Activated naive CD4-positive, alpha-beta T cell treated with anti-CD3 and anti-CD28 coated beads for 36 hours (primary cell): ENCODE measurements at regions of chr2 and their contacts with region 1.

Region 1: GRCh38 chr2:60873381-60873780 is 8.0 kb upstream of the REL start:
- DNase-seq: peak; percentile 51
- H3K4me3 Mint-ChIP-seq: no peak overlapping the region
- H3K27ac Mint-ChIP-seq: peak overlapping the region; percentile 69
- H3K4me1 Mint-ChIP-seq: peaks cover 32% of the 10 kb centered on the region
- H3K27me3 Mint-ChIP-seq: no peaks in the 10 kb centered on the region

Region 2: DNA sequence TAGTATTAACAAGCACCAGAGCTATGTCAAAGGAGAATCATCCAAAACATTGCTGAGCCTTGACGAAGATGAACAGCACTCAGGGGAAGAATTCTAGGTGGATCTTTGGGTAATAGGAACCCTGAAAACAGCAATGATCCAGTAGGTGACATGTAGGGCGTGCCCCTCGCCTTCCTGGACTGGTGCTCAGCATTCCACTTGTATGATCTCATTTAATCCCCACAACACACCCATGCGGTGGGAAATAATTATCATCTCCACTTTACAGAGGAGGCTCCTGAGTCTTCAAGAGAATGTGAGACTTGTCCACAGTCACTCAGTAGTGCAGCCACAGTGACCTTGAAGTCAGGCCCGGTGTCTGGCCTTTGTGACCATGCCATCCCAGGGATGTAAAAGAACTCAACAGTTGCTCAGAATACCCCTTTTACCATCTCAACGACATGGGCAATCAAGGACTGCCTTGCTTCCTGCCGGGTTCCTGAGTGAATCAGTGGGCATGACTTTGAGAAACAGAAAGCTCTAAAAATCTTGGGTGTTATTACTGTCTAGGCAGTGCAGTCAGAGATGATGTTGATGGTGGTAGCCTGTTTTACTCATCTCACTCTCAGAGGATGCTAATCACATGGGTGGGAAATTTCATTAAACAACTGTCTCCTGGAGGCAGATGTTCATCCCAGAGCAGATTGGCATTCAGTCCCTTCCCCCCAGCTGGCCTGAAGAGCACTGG is 481.6 kb before region 1 on chr2:
- CTCF ChIA-PET with region 1: no interaction called
- intact Hi-C with region 1: no loop called
- DNase-seq: no peak
- H3K4me3 Mint-ChIP-seq: no peak overlapping the region
- H3K27ac Mint-ChIP-seq: no peak overlapping the region
- H3K4me1 Mint-ChIP-seq: no peaks in the 10 kb centered on the region
- H3K27me3 Mint-ChIP-seq: peaks cover 3% of the 10 kb centered on the region

Region 3: DNA sequence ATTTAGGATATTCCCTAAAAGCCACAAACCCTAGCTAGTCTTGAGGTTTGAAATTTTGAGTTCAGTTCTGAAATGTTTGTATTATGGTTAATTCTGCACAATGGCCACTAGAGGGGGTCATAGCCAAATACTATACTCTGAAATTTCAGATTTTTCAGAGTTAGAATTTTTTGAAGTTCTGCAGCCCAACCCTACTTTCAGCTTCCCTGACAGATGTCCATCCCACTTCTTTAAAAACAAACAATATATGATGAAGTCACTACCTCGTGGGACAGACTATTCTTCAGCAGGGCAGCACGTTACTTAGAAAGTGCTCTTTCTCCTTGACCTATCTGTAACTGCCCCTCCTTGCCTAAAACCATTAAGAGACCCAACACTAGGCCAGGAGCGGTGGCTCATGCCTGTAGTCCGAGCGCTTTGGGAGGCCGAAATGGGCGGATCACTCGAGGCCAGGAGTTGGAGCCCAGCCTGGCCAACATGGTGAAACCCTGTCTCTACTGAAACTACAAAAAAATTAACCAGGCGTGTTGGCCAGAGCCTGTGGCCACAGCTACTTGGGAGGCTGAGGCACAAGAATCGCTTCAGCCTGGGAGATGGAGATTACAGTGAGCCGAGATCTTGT is 165.5 kb before region 1 on chr2:
- CTCF ChIA-PET with region 1: no interaction called
- intact Hi-C with region 1: no loop called
- DNase-seq: no peak
- H3K4me3 Mint-ChIP-seq: no peak overlapping the region
- H3K27ac Mint-ChIP-seq: no peak overlapping the region
- H3K4me1 Mint-ChIP-seq: no peaks in the 10 kb centered on the region
- H3K27me3 Mint-ChIP-seq: no peaks in the 10 kb centered on the region

Region 4: GRCh38 chr2:60818272-60818671 is 55.1 kb before region 1 on chr2:
- CTCF ChIA-PET with region 1: no interaction called
- intact Hi-C with region 1: loop called (anchors 1 kb)
- DNase-seq: peak; percentile 80
- H3K4me3 Mint-ChIP-seq: no peak overlapping the region
- H3K27ac Mint-ChIP-seq: peak overlapping the region; percentile 89
- H3K4me1 Mint-ChIP-seq: peaks cover 52% of the 10 kb centered on the region
- H3K27me3 Mint-ChIP-seq: no peaks in the 10 kb centered on the region

Region 5: DNA sequence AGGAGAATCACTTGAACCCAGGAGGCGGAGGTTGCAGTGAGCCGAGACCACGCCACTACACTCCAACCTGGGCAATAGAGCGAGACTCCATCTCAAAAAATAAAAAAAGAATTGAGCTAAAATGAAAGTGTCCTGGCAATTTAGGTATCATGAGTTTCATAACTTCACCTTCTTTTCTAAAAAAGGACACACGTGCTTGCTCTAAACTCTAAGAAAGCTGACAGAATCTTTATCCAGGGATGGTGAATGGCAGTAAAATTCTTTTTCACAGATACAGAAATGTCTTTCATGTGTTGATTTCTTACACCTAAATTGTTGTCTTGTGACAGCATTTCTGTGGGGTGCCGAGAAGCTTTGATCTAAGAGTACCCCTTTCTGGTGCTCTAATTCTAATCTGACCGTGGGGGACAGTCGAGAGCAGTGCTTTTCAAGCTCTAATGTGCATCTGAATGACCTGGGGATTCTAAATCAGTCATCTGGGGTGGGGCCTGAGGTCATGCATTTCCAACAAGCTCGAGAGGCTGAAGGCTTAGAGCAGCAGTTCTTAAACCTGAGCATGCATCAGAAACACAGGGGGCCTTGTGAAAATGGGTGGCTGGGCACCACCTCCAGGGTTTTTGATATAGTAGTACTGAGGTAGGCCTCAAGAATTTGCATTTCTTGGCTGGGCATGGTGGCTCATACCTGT is 34.1 kb before region 1 on chr2:
- CTCF ChIA-PET with region 1: no interaction called
- intact Hi-C with region 1: loop called (anchors 1 kb)
- DNase-seq: no peak
- H3K4me3 Mint-ChIP-seq: no peak overlapping the region
- H3K27ac Mint-ChIP-seq: no peak overlapping the region
- H3K4me1 Mint-ChIP-seq: peaks cover 32% of the 10 kb centered on the region
- H3K27me3 Mint-ChIP-seq: no peaks in the 10 kb centered on the region

Region 6: DNA sequence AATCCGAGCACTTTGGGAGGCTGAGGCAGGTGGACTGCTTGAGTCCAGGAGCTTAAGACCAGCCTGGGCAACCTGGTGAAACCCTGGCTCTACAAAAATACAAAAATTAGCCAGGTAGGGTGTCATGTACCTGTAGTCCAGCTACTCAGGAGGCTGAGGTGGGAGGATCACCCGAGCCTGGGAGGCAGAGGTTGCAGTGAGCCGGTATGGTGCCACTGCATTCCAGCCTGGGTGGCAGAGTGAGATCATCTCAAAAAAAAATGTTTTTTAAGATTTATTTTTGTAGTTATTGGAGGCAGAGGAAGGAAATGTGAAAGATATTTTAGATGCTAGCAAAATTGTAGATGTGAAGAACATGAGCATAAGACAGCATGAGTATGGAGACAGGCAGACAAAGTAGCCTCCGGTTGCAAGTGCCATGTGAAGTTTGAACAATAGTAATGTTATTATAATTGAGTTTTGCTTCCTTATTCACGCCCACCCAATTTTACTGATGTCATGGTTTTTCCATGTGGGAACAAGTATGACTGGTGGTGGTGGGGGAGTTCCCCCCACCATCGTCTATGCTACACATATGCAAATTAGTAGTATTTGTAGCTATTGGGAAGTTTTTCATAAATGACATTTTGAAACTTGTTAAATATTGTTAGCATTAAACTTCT is 26.0 kb after region 1 on chr2:
- CTCF ChIA-PET with region 1: no interaction called
- intact Hi-C with region 1: loop called (anchors 1 kb)
- DNase-seq: peak; percentile 77
- H3K4me3 Mint-ChIP-seq: peak overlapping the region; percentile 24
- H3K27ac Mint-ChIP-seq: peak overlapping the region; percentile 90
- H3K4me1 Mint-ChIP-seq: peaks cover 51% of the 10 kb centered on the region
- H3K27me3 Mint-ChIP-seq: no peaks in the 10 kb centered on the region

Region 7: DNA sequence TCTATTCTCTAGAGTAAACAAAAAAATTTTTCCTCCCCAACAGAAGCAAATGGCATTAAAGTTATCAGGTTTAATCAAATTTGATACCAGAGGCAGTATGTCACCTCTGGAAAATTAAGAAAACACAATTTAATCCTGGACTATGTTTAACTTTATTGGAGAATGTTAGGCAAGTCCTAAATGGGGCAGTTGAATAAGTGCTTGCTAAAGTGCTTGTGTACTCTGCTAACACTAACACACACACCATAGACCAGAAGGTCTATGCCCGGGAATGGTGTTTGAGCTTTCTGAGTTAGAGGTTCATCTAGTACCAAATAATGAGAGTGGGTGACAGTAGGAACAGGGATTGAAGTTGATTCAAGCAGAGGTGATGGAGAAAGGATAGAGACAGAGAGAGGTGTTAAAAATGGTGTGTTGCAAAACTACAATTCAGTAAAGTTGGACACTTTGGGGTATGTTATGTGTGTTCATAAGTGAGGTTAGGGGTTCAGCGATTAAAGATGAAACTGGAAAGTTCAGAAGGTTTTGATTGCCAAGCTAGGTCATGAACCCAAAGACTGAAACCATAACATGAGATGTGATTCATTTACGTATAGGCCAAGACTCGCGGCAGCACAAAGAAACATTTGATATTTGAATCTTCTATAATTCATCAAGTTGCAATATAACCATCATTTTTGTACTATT is 103.6 kb after region 1 on chr2:
- CTCF ChIA-PET with region 1: no interaction called
- intact Hi-C with region 1: loop called (anchors 1 kb)
- DNase-seq: peak; percentile 48
- H3K4me3 Mint-ChIP-seq: no peak overlapping the region
- H3K27ac Mint-ChIP-seq: peak overlapping the region; percentile 69
- H3K4me1 Mint-ChIP-seq: peaks cover 53% of the 10 kb centered on the region
- H3K27me3 Mint-ChIP-seq: no peaks in the 10 kb centered on the region

Region 8: DNA sequence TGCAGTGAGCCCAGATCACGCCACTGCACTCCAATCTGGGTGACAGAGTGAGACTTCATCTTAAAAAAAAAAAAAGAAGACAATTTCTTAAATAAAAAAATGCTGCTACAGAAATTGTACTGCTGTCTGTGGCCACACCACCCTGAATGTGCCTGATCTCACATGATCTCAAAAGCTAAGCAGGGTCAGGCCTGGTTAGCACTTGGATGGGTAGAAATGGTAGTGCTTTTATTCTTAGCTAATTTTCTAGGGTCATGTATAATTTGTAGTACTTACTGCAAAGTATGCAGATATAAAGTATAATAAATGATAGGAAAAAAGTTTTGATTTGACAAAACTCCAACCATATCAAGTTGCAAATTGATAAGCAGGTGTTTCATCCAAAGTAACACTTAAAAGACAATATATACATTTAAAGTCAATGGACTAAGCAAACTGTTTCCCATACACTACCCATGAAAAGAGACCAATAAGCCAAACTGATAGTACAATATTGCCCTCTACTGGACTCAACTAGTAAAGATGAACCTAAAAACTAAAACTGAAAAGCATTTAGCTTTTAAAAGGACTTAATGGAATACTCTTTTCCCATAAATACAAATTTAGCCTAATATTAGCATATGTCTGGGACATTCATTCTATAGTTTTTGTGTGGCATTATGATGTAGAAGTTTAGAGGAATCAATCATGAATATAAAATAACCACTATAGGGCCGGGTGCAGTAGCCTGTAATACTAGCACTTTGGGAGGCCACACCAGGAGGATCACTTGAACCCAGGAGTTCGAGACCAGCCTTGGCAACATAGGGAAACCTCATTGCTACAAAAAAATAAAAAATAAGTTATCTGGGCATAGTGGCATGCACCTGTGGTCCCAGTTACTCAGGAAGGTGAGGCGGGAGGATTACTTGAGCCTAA is 125.5 kb after region 1 on chr2:
- CTCF ChIA-PET with region 1: interaction called, 7 read pairs
- intact Hi-C with region 1: loop called (anchors 2 kb)
- DNase-seq: no peak
- H3K4me3 Mint-ChIP-seq: no peak overlapping the region
- H3K27ac Mint-ChIP-seq: no peak overlapping the region
- H3K4me1 Mint-ChIP-seq: no peaks in the 10 kb centered on the region
- H3K27me3 Mint-ChIP-seq: no peaks in the 10 kb centered on the region

Region 9: GRCh38 chr2:62202019-62202722 is 1328.8 kb after region 1 on chr2:
- CTCF ChIA-PET with region 1: no interaction called
- intact Hi-C with region 1: loop called (anchors 2 kb)
- DNase-seq: peak; percentile 35
- H3K4me3 Mint-ChIP-seq: peak overlapping the region; percentile 17
- H3K27ac Mint-ChIP-seq: peak overlapping the region; percentile 97
- H3K4me1 Mint-ChIP-seq: peaks cover 79% of the 10 kb centered on the region
- H3K27me3 Mint-ChIP-seq: no peaks in the 10 kb centered on the region